Posterior cingulate gyrus (tissue), 11 donors: ENCODE measurements at regions of chr17 and their contacts with region 1.

Region 1: DNA sequence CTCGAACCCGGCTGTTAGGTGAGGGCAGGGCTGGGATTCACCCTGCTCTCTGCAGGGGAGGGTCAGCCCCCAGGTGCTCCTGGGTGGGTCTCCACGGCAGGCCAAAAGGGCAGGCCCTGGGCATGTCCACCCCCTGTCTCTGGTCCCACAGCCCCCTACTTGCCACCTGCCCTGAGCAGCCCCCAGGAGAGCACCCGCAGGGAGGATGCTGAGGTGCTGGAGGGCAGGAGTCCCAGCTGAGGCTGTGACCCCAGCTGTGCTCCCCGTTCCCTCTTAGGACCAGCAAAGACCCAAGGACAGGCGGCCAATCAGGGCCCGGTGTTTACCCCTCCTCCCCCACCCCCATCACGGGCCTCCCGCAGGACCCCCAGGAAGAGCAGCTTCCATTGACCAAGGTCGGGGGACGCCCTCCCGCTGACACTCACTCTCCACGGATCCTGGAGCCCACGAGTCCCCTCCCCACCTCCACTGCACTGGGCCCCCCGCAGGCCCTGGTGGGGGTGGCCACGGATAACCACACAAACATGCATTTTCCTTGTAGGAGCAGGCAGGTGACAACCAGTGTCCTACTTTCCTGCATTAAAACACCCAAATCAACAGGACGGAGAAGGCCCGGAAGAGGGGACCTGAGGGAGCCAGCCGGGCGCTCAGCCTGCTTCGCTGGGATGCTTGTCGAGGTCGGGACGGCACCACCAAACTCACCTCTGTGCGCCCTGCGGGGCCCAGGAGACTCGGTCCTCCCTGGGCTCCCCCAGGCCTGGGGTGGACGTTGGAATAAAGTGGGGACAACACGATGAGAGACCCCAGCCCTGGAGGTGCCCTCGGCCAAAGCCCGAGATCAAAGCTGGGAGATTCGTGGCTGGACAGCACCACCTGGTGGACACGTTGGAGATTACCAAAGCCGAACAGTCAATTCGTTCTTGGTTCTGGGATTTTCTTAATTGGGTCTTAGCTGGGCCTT is 22.5 kb upstream of the ENPP7 start:
- DNase-seq: peak in 9 of 10 donors; percentile 49 to 92 (median 67)

Region 2: GRCh38 chr17:79413611-79414010 is 294.6 kb before region 1 on chr17:
- intact Hi-C with region 1: loop called (anchors 5 kb)
- DNase-seq: no peak

Region 3: GRCh38 chr17:79728226-79728907 is 20.2 kb after region 1 on chr17:
- intact Hi-C with region 1: no loop called
- DNase-seq: peak; percentile 83 to 98 (median 92)